ENCODE measurements at regions of chr3 and their contacts with region 1.

Region 1: GRCh38 chr3:12706504-12707253 is 42.8 kb upstream of the RAF1 start:
- H3K4me3 ChIP-seq: no peak overlapping the region
- H3K27ac ChIP-seq: no peak overlapping the region
- H3K4me1 ChIP-seq: no peaks in the 10 kb centered on the region
- CTCF ChIP-seq: peak; percentile 89

Region 2: DNA sequence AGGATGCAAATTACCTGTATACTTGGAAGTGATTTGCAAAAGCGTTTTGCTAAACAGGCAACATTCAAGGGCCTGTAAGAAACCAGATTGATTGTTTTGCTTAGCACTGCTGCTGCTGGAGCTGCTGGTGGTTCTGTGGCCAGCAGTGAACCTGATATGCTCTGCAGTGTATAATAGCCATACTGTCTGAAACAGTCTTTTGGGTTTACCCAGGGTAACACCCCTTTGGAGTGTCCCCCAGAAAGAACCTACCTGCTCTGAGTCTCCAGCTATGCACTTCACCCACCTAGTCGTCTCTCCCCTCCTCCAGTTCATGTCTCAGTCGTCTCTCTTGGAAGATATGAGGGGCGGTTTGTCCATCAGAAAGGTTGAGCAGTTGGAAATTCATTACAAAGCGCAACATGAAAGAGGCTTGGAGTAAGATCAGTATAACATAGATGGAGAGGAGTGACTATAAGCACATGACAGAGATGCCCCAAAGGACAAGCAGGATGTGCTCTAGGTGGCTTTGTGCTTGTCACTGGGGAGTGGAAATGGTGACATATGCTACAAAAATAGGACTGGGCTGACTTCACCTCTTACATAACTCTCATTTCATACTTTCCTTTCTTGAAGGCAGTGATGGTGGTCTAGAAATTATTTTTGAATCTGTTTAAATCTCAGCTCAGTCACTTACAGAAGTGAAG is 146.0 kb before region 1 on chr3:
- CTCF ChIA-PET with region 1: no interaction called
- POLR2A ChIA-PET with region 1: no interaction called
- H3K4me3 ChIP-seq: no peak overlapping the region
- H3K27ac ChIP-seq: no peak overlapping the region
- H3K4me1 ChIP-seq: peaks cover 23% of the 10 kb centered on the region
- CTCF ChIP-seq: no peak

Region 3: DNA sequence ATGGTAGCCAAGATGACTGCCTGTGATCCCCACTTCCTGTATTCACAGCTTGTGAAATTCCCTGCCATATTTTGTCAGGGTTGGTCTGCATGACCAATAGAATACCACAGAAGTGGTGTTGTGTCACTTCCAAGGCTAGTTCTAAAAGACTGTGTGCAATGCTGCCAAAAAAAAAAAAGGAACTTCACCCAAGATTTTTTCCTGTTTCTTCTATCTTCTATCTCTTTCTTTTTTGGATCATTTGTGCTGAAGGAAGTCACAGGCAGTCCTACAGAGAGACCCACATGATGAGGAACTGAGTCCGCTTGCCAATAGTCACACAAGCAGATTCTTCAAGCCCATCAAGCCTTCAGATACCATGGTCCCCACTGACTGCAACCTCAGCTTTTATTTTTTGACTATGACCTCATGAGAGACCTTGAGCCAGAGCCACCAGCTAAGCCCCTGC is 24.7 kb before region 1 on chr3:
- CTCF ChIA-PET with region 1: interaction called, 13 read pairs
- POLR2A ChIA-PET with region 1: no interaction called
- H3K4me3 ChIP-seq: no peak overlapping the region
- H3K27ac ChIP-seq: no peak overlapping the region
- H3K4me1 ChIP-seq: no peaks in the 10 kb centered on the region
- CTCF ChIP-seq: no peak

Region 4: DNA sequence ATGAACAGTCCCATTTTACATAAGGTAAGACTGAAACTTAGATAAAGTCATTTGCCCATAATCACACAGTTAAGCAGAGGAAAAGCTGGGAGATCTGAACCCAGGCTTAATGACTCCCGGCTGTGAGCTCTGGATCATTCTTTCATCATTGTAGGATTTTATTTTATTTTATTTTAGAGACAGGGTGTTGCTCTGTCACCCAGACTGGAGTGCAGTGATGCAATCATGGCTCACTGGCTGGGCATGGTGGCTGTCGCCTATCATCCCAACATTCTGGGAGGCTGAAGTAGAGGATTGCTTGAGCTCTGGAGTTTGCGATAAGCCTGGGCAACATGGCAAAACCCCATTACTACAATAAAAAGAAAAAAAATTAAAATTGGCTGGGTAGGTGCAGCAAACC is 11.6 kb before region 1 on chr3:
- CTCF ChIA-PET with region 1: interaction called, 17 read pairs
- POLR2A ChIA-PET with region 1: no interaction called
- H3K4me3 ChIP-seq: no peak overlapping the region
- H3K27ac ChIP-seq: no peak overlapping the region
- H3K4me1 ChIP-seq: no peaks in the 10 kb centered on the region
- CTCF ChIP-seq: no peak

Region 5: DNA sequence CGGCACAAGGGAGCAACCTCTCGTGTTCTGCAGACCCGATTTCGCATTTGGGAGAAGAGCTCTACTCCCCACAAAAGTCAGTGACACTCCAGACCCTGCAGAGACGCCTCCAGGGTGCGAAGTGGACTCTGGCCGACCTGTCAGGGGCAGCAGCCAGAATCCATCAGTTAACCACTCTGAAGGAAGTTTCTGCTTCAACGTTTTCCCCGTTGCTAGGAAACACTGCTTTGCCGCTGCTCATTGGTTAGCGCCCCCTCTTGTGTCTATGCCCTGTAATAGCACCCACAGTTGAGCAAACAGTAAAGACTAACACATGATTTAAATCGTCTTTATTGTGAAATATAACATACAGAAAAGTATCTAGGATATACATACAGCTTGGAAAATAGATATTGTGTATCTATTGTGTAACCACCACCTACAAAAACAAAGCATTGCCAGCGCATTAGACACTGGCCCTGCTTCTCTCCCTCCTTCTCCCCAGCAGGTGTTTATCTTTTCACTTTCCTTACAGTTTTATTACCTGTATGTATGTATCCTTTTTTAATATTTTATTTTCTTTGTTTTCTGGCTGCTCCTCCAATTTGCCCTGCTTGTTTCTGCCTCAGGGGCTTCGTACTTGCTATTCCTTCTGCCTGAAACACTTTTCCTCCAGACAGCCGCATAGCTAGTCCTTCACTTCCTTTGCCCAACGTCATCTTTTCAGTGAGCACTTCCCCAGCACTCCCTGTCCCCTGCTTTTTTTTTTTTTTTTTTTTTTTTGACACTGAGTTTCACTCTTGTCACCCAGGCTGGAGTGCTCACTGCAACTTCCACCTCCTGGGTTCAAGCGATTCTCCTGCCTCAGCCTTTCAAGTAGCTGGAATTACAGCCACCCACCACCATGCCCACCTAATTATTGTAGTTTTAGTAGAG is 13.6 kb after region 1 on chr3:
- CTCF ChIA-PET with region 1: interaction called, 33 read pairs
- POLR2A ChIA-PET with region 1: no interaction called
- H3K4me3 ChIP-seq: no peak overlapping the region
- H3K27ac ChIP-seq: no peak overlapping the region
- H3K4me1 ChIP-seq: no peaks in the 10 kb centered on the region
- CTCF ChIP-seq: peak; percentile 72

Region 6: DNA sequence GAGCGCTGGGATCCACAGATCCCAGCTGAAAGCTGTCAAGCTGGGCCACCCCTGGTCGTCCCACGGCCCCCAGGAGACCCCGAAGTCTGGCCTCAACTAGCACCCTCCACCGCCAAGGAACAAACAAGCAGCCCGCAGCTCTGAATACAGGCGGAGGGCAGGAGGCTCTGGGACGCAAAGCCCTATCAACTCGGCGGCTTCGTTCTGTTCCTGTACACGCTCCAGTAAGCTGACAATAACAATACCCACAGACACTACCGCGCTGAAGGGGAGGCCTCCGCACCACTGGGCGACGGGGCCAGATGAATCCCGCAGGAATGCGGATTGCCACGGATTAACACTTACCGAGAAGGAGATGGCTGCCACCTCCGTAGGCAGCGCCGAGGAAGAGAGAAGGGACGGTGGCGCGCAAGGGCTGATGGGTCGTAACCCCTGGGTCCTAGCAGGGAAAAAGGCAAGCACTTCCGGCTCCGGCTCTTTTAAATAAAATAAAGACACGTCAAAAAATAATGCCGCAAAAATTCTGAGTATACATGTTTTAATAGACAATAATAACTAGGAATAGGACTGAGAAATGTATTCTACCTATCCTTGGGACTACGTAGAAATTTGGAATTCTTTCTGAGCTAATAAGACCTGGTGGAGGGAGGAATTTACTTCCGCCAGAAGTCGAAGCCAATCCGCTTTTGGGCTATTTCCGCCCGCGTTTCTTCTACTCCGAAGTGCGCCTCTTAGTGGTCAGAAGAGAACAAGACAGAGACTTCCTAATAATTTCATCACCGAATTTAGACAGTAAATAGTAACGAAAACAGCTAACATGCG is 134.7 kb after region 1 on chr3 and contains the start of gene RPL32:
- CTCF ChIA-PET with region 1: interaction called, 10 read pairs
- POLR2A ChIA-PET with region 1: no interaction called
- H3K4me3 ChIP-seq: peak within 1 kb of the TSS; percentile 93
- H3K27ac ChIP-seq: peak within 1 kb of the TSS; percentile 98
- H3K4me1 ChIP-seq: no peaks in the 10 kb centered on the region
- CTCF ChIP-seq: peak; percentile 56; the same call in 1 of the 2 replicates

Region 7: DNA sequence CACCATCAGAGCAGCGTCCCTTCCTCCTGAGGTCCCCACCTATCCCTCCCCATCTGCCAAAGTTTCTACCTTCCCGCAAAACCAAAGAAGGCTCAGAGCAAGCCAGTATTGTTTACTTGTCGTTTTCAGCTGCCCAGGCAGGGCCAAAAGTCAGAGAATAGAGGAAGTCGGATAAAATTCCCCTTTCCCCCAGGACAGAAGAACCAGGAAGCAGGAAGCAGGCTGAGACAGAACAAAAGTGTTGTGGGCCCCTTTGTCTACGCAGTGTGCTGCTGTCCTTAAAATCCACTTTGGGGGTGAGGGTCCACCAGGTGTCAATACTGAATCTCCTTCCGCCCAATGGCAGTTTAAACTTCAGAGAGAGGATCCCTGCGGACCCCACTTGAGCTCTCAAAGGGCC is 153.2 kb after region 1 on chr3:
- CTCF ChIA-PET with region 1: no interaction called
- POLR2A ChIA-PET with region 1: no interaction called
- H3K4me3 ChIP-seq: no peak overlapping the region
- H3K27ac ChIP-seq: no peak overlapping the region
- H3K4me1 ChIP-seq: no peaks in the 10 kb centered on the region
- CTCF ChIP-seq: no peak

Region 8: DNA sequence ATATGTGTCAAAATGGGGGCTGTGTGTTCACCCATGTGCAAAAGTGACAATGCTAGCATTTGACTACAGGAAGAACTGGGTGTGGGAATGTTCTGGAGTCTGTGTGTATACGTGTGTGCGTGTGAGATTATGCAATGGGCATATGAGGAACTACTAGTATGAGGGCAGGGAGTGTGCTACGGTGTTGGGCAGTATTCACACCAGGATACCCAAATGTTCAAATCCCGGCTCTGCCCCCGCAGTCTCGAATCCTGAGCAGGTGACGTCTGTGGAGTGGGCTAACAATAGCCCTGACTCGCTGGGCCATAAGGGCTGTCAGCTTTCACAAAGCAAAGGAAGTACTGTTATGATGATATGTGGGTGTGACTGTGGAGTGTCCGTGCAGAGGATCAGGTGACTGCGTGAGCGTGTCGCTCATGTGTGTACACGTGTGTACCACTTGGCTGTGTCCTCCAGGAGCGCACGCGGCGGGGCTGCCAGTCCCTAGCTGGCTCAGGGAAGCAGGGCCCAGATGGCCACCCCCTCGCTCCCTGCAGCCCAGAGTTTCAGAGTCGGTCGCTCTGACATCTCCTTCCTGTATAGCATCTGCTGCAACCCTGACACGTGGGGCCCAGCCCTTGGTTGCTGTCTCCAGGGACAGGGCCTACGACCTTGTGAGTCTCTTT is 339.4 kb after region 1 on chr3:
- CTCF ChIA-PET with region 1: no interaction called
- POLR2A ChIA-PET with region 1: no interaction called
- H3K4me3 ChIP-seq: no peak overlapping the region
- H3K27ac ChIP-seq: no peak overlapping the region
- H3K4me1 ChIP-seq: no peaks in the 10 kb centered on the region
- CTCF ChIP-seq: no peak